Activated CD4-positive, alpha-beta T cell treated with anti-CD3 and anti-CD28 coated beads, Interleukin-2, amount 10 ng/mL, durations not matched to agents 24 days and 14 days (primary cell): ENCODE measurements at regions of chr11 and their contacts with region 1.

Region 1: GRCh38 chr11:69686452-69686851 is 11.3 kb upstream of the LTO1 start:
- DNase-seq: no peak
- H3K4me3 Mint-ChIP-seq: no peak overlapping the region
- H3K27ac Mint-ChIP-seq: no peak overlapping the region
- H3K4me1 Mint-ChIP-seq: peaks cover 14% of the 10 kb centered on the region
- H3K27me3 Mint-ChIP-seq: peaks cover 21% of the 10 kb centered on the region

Region 2: GRCh38 chr11:69801519-69802335 is 115.3 kb after region 1 on chr11:
- intact Hi-C with region 1: loop called (anchors 5 kb)
- DNase-seq: peak; percentile 74
- H3K4me3 Mint-ChIP-seq: no peak overlapping the region
- H3K27ac Mint-ChIP-seq: no peak overlapping the region
- H3K4me1 Mint-ChIP-seq: no peaks in the 10 kb centered on the region
- H3K27me3 Mint-ChIP-seq: no peaks in the 10 kb centered on the region

Region 3: GRCh38 chr11:69841859-69842698 is 155.6 kb after region 1 on chr11:
- intact Hi-C with region 1: loop called (anchors 2 kb)
- DNase-seq: peak; percentile 71
- H3K4me3 Mint-ChIP-seq: no peak overlapping the region
- H3K27ac Mint-ChIP-seq: no peak overlapping the region
- H3K4me1 Mint-ChIP-seq: no peaks in the 10 kb centered on the region
- H3K27me3 Mint-ChIP-seq: peaks cover 1% of the 10 kb centered on the region

Region 4: GRCh38 chr11:69888483-69889076 is 202.1 kb after region 1 on chr11:
- intact Hi-C with region 1: loop called (anchors 1 kb)
- DNase-seq: peak; percentile 90
- H3K4me3 Mint-ChIP-seq: no peak overlapping the region
- H3K27ac Mint-ChIP-seq: no peak overlapping the region
- H3K4me1 Mint-ChIP-seq: peaks cover 5% of the 10 kb centered on the region
- H3K27me3 Mint-ChIP-seq: peaks cover 9% of the 10 kb centered on the region

Region 5: DNA sequence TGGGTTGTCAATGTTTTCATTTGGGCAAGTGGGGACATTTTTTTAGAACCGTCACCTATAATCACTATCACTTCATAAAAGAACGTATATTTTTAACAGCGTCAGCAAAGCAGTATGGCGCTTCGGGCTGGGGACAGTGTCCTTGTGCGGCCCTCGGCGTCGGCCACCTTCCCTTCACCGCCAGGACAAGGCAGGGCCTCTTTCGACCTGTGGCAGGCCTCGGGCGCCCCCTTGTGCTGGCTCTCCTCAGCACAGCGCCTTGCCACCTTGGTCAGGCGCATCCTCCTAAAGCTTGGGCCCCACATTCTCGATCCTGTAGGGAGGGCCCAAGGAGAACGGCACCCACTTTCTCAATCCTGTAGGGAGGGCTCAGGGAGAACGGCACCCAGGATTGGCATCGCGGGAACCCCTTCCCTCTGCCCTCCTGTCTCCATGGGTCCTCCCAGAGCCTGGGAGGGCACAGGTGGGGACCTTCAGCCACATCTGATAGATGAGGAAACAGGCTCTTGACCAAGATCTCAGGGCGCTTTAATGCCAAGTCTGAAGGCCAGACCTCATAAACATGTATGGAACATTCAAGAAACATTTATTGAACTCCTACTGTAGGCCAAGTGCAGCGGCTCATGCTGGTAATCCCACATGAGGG is 505.2 kb after region 1 on chr11:
- intact Hi-C with region 1: loop called (anchors 5 kb)
- DNase-seq: peak; percentile 90
- H3K4me3 Mint-ChIP-seq: no peak overlapping the region
- H3K27ac Mint-ChIP-seq: no peak overlapping the region
- H3K4me1 Mint-ChIP-seq: peaks cover 3% of the 10 kb centered on the region
- H3K27me3 Mint-ChIP-seq: no peaks in the 10 kb centered on the region

Region 6: DNA sequence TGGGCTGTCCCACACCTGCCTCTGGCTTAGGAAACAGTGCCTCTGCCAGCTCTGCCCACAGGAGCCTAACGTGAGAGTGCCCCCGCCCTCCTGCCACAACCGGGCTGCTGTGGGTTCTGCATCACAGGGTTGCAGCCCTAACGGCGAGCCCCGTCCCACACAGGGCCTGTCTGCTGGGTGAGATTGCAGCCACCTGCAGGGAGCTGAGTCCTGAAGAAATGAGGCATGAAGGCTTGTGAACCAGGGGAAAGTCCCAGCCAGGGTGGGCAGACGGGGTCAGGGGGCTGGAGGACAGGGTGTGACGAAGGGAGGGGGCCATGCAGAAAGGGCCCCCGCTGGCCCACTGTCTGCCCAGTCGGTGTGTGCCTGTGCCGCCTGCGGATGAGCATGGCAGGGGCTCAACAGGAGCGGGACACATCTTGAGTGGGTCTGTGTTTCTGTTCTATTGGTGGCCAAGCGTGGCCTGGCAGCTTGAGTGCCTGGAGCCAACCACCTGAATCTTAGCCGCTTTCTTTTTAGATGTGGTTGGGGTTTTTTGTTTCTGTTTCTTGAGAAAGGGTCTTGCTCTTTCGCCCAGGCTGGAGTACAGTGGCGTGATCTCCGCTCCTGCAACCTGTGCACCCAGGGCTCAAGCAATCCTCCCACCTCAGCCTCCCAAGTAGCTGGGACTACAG is 750.8 kb after region 1 on chr11:
- intact Hi-C with region 1: no loop called
- DNase-seq: no peak
- H3K4me3 Mint-ChIP-seq: no peak overlapping the region
- H3K27ac Mint-ChIP-seq: no peak overlapping the region
- H3K4me1 Mint-ChIP-seq: no peaks in the 10 kb centered on the region
- H3K27me3 Mint-ChIP-seq: no peaks in the 10 kb centered on the region